GM23248 (cell line): ENCODE measurements at regions of chr11 and their contacts with region 1.

Region 1: DNA sequence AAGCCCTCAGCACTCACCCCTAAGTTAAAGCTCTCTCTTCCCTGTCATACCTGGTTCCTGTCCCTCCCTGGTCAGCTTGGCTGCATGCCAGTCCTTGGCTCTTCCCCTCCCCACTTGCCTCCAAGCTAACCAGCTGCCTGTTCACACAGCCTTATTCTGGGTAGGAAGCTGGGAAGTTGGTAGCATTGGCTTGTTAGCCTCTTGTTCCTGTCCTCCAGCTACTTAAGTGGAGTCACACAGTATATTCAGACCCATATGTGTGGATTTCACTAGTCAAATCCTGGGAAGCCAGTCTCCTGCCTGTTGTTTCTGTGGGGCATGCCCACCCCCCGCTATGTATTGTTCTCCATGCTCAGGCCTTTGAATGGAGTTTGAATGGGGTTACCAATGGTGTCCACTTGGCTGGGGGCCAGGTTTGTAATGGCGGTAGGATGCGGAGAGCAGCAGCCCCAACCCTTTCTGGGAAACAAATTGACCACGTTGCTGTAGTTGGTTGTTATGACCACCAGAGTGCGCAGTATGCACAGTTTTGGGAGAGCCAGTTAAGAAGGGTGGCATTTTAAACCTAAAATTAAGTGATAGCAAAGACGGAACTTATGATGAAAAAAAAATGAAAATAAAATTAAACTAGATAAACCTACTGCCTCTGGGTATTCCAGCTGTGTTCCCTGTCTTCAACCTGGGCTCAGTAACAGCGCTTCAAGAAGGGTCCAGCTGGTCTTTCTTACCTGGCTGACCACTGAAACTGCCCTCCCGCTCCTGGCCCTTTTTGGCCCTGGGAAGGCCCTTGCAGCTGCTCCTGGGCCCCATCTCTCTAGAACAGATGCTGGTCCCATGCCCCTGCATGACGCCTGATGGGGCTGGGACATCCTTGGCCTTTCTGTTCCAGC is 10.7 kb upstream of the RPS3 start:
- DNase-seq: peak; percentile 83
- H3K4me3 ChIP-seq: no peak overlapping the region
- H3K27ac ChIP-seq: no peak overlapping the region
- H3K4me1 ChIP-seq: no peaks in the 10 kb centered on the region; the same call in 1 of the 2 replicates
- H3K27me3 ChIP-seq: no peaks in the 10 kb centered on the region

Region 2: DNA sequence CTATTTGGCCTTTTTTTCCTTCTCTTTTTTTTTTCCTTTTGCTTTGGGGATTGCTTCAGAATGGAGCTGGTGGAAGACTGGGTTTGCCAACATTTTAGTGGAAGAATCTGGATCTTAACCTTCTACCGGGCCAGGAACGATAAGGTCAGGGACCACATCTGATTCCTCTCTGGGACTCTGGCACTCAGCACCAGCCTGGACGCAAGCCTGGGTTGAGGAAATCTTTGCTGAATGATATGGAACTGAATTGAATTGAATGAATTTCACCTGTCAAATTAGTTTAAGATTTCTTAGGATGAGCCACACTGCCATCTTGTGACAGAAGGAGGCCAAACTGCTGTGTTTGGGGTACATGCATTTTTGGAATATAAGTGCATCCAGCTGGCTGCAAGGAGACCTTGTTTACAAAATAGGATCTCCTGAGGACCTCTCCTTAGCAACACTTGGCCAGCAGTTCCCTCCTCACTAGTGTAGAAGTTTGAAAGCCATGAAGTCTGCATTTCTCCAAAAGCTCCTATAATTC is 117.7 kb before region 1 on chr11:
- in situ Hi-C with region 1: loop called (anchors 5 kb)
- DNase-seq: peak; percentile 47
- H3K4me3 ChIP-seq: no peak overlapping the region
- H3K27ac ChIP-seq: no peak overlapping the region
- H3K4me1 ChIP-seq: no peaks in the 10 kb centered on the region
- H3K27me3 ChIP-seq: no peaks in the 10 kb centered on the region

Region 3: GRCh38 chr11:75337195-75337654 is 51.4 kb before region 1 on chr11:
- in situ Hi-C with region 1: loop called (anchors 10 kb)
- DNase-seq: peak; percentile 74
- H3K4me3 ChIP-seq: no peak overlapping the region
- H3K27ac ChIP-seq: peak overlapping the region; percentile 27
- H3K4me1 ChIP-seq: peaks cover 40% of the 10 kb centered on the region
- H3K27me3 ChIP-seq: no peaks in the 10 kb centered on the region

Region 4: DNA sequence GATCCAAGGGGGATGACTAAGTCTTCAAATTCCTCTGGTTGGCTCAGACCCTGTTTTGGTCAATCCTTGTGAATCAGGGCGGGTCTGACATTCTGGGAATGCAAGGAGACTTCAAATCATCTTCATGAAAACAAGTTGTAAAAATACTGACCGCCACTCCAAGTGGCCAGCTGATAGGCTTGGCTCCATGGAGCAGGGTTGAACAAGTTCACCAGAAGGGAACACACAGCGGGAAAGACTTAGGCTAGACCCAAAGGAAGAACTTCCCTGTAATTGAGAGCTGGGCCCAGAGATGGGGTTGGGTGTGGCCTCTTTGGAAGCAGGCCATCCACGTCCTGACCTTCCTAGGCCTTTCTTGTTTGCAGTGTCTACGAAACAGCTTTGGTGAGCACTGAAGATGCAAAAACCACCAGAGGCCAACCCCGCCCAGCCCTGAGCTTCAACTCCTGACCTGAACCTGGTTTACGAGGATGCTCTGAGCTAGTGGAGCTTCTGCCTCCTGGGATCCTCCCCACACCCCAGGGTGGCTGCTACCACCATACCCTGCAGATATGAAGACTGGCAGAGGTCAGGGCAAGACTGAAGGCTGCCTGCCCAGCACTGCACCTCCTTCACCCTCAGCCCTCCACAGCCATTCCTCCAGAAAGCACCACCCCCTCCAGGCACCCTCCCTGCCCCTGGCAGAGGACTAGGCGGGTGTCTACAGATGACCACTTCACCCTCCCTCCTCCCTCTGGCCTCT is 111.0 kb after region 1 on chr11:
- in situ Hi-C with region 1: no loop called
- DNase-seq: peak; percentile 97
- H3K4me3 ChIP-seq: peak overlapping the region; percentile 44
- H3K27ac ChIP-seq: peak overlapping the region; percentile 90
- H3K4me1 ChIP-seq: peaks cover 23% of the 10 kb centered on the region
- H3K27me3 ChIP-seq: no peaks in the 10 kb centered on the region